ENCODE measurements at regions of chr11 and their contacts with region 1.

Region 1: GRCh38 chr11:7892840-7893254 is 38.2 kb downstream of the OR10A6 start:
- DNase-seq: peak in 1 of 2 donors; percentile 70
- H3K4me3 ChIP-seq: no peak overlapping the region
- H3K27ac ChIP-seq: peak overlapping the region in 2 of 5 donors; percentile 32 to 34
- H3K4me1 ChIP-seq: peaks cover 0 to 26% (median 9%) of the 10 kb centered on the region in 4 donors
- H3K27me3 ChIP-seq: no peaks in the 10 kb centered on the region
- CTCF ChIP-seq: peak in 5 of 7 experiments; percentile 53 to 80 (median 60)
- EP300 ChIP-seq: no peak
- POLR2A ChIP-seq: no peak

Region 2: GRCh38 chr11:7982582-7983119 is 89.8 kb after region 1 on chr11:
- intact Hi-C with region 1: loop called (anchors 5 kb)
- DNase-seq: no peak
- H3K4me3 ChIP-seq: no peak overlapping the region
- H3K27ac ChIP-seq: no peak overlapping the region
- H3K4me1 ChIP-seq: peaks cover 0 to 13% (median 7%) of the 10 kb centered on the region in 4 donors
- H3K27me3 ChIP-seq: no peaks in the 10 kb centered on the region
- CTCF ChIP-seq: no peak
- EP300 ChIP-seq: no peak
- POLR2A ChIP-seq: no peak